ENCODE measurements at regions of chr10 and their contacts with region 1.

Region 1: DNA sequence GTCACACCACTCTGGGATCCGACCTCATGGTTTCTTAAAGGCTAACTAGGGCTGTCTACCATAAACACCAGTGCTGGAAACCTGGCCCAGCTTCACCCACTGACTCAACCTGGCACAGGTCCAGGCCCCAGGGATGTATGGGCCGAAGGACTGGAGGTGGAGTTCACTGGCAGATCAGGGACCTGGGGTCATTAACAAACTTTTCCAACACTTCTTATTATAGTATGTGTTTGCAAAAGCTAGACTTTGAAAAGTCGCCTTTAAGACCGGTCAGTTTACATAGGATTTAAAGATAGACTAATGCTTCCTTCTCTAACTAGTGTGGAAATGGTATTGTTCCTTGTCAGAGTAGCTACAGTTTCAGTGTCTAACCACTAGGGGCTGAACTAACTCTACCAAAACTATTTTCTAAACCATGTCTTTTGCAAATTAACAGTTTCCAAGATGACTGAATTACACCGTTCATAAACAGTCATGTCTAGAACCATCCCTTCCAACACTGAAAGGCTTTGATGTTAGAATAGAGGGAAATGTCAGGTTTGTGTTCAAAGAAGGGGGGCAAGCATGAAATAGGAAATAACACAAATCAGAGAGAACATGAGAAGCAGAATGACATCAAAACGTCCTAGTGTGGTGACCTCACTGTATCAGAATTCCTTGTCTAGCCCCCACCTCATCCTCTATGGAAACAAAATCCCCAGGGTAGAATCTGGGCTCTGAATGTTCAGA is 29.7 kb downstream of the STN1 start:
- DNase-seq: peak; percentile 31
- H3K4me3 ChIP-seq: no peak overlapping the region
- H3K27me3 ChIP-seq: no peaks in the 10 kb centered on the region
- CTCF ChIP-seq: peak; percentile 77

Region 2: DNA sequence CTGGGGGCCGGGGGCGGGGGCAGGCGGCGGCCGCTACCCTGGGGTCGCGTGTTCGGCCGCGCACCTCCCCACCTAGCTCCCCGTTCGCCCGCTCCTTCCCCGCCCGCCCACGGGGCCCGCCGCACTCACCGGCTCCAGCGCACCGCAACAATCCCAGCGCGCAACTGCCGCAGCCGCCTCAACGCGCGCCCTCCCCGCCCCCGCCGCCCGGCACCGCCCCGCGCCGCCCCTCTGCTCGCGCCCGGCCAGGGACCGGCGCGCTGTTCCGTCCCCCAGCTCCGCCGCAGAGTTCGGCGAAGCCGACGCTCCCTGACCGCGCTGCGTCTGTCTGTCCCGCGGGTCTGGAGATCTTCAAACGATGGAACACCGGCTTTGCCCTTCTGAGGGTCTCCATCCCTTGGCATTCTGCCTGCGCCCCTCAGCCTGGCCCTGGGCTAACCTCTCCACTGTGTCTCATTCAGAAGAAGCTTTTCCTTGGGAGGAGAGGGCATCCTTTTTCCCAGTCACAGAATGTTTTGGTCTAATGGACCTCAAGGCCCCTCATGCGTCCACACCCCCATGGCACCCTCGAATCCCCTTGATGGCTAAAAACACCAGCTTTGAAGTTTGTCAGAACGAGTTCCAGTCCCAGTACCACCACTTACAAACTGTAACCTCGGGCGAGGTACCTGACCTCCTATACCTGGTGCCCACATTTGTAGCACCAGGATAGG is 695.0 kb before region 1 on chr10 and contains the start of gene NT5C2:
- CTCF ChIA-PET with region 1: no interaction called
- POLR2A ChIA-PET with region 1: no interaction called
- DNase-seq: no peak
- H3K4me3 ChIP-seq: peak within 1 kb of the TSS; percentile 89
- H3K27me3 ChIP-seq: no peaks in the 10 kb centered on the region
- CTCF ChIP-seq: no peak
- polyA plus RNA-seq, gene NT5C2: 49.3 and 85.0 TPM in 2 replicates

Region 3: GRCh38 chr10:103703941-103704919 is 184.0 kb before region 1 on chr10:
- CTCF ChIA-PET with region 1: interaction called, 138 read pairs
- POLR2A ChIA-PET with region 1: no interaction called
- DNase-seq: no peak
- H3K4me3 ChIP-seq: no peak overlapping the region
- H3K27me3 ChIP-seq: no peaks in the 10 kb centered on the region
- CTCF ChIP-seq: no peak

Region 4: DNA sequence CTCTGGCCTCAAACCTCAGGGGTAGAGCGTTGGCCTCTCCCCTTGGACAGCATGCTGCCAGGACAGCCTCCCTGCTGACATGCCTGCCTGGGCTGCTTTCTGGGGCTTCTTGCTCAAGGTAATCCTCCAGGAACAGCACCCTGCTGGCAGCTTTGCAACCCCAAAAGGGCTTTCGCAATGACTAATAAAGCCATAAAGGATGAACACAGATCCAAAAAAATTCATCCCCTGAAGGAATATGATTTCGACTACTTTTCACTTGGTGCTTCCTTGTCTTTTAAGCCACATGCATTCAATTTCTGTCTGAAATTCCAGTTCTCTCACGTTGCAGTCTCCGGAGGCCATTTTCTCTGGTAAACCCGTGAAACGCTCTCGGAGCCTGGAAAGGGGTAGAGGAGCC is 17.8 kb before region 1 on chr10:
- CTCF ChIA-PET with region 1: interaction called, 14 read pairs
- POLR2A ChIA-PET with region 1: no interaction called
- DNase-seq: peak; percentile 81
- H3K4me3 ChIP-seq: no peak overlapping the region
- H3K27me3 ChIP-seq: no peaks in the 10 kb centered on the region
- CTCF ChIP-seq: peak; percentile 36

Measured in BJ (cell line).